ENCODE measurements at regions of chrX and their contacts with region 1.

Region 1: GRCh38 chrX:40013266-40014195 is 84.2 kb downstream of the BCOR start:
- DNase-seq: peak; percentile 65 to 72 (median 71)
- ATAC-seq: peak; percentile 45 to 61 (median 58)
- H3K4me3 ChIP-seq: peak overlapping the region; percentile 49 to 65 (median 55)
- H3K27ac ChIP-seq: peak overlapping the region; percentile 72 to 85 (median 76)
- H3K4me1 ChIP-seq: peaks cover 0 to 11% (median 0%) of the 10 kb centered on the region in 4 donors
- H3K27me3 ChIP-seq: peaks cover 3 to 5% of the 10 kb centered on the region in 2 donors
- CTCF ChIP-seq: no peak
- POLR2A ChIP-seq: no peak

Region 2: DNA sequence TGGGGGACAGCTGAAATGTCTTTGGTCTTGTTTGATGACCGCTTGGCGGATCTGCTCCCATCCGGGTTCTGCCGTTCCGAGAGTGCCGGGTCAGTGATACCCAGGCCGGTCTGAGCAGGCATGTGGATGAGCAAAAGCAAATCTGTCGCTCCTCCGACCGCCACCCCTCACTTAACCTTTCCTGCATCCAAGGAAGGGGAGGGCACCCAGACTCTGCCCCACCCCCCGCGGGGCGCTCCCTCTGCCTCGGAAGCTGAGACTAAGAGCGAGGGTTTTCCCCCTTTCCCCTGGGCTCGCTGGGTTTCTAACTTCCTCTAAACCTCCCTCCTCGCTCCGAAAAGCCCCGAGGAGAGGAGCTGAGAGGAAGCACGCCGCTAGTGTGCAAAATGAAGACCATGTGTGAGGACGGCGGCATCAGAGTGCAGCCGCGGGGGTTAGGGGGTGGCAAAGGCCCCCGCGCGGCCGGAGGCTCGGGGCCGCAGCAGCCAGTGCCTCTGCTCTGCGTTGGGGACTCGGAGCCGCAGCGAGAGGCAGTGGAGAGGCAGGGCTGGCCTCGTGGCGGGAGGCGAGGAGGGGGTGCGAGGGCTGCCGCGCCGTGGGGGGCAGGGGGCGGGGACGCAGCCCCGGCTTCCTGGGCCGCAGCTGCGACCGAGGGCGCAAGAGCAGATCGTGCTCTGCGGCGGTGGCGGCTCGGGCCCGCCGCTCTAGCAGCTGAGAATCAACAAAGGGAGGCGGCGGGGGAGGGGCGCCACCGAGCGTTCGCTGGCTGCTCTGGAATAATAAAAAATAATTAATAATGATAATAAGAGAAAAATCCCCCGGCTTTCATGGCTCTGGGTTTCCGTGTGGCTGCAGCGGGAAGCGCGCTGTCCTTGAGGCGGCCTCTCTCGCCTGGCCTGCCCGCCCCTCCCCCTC is 140.1 kb after region 1 on chrX:
- intact Hi-C with region 1: loop called in 1 of 2 experiments (anchors 5 kb)
- DNase-seq: peak in 2 of 3 donors; percentile 58 to 64
- ATAC-seq: peak in 3 of 4 donors; percentile 13 to 17 (median 15)
- H3K4me3 ChIP-seq: peak overlapping the region; percentile 27 to 47 (median 46)
- H3K27ac ChIP-seq: peak overlapping the region in 2 of 3 donors; percentile 10 to 86
- H3K4me1 ChIP-seq: peaks cover 0 to 12% (median 3%) of the 10 kb centered on the region in 4 donors
- H3K27me3 ChIP-seq: no peaks in the 10 kb centered on the region
- CTCF ChIP-seq: peak in 3 of 4 donors; percentile 5 to 21 (median 13)
- POLR2A ChIP-seq: no peak

Region 3: DNA sequence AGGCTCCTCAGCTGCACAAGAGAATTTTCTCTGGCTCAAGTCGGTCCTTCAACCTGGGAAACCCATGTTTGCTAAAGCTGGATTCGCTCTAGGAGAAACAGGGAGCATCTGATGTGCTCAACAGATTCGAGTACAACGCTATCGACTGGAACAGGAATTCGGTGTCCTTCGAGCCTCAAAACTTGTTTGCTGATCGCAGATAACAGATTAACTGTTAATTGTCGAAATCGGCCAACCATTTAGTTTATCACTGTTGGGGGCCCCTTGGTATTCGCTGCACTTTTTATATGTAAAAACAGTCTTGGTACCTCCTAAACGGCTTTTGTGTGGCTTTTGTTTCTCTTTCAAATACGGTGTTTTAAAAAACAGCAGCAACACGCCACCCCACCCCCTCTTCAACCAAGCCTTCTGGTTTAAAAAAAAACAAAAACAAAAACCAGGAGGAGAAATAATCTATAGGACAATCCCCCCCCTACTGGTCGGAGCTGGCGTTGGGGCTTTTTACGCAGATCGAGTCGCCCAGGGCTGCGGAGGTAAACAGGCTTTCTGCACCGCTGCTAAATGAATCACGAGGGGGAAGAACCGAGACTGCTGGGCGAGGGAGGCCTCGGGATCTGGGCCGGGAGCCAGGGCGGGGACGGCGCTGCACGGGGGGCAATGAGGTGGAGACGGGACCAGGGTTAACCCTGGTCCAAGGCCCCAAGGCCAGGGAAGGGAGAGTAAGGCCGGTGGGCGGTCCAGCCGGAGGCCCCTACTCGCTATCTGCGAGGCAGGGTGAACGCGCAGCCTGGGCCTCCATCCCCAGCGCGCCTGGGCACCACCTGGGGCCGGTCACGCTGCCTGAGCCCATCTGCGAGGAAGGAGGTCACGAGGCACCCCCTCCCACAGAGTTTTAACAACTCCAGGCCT is 155.9 kb after region 1 on chrX:
- intact Hi-C with region 1: loop called in 1 of 2 experiments (anchors 10 kb)
- DNase-seq: peak in 2 of 3 donors; percentile 53 to 60
- ATAC-seq: peak in 1 of 4 donors; percentile 8
- H3K4me3 ChIP-seq: no peak overlapping the region
- H3K27ac ChIP-seq: no peak overlapping the region
- H3K4me1 ChIP-seq: peaks cover 0 to 24% (median 7%) of the 10 kb centered on the region in 4 donors
- H3K27me3 ChIP-seq: no peaks in the 10 kb centered on the region
- CTCF ChIP-seq: peak in 2 of 4 donors; percentile 11 to 17
- POLR2A ChIP-seq: no peak